Activated T-helper 2 cell treated with anti-CD3 and anti-CD28 coated beads, Interferon-gamma antibody, Interleukin-2, Interleukin-4, amounts not matched to agents 10 μg/mL and 5 μg/mL and 100 μg/mL, durations not matched to agents 14 hours and 24 hours and 36 hours (primary cell): ENCODE measurements at regions of chr16 and their contacts with region 1.

Region 1: DNA sequence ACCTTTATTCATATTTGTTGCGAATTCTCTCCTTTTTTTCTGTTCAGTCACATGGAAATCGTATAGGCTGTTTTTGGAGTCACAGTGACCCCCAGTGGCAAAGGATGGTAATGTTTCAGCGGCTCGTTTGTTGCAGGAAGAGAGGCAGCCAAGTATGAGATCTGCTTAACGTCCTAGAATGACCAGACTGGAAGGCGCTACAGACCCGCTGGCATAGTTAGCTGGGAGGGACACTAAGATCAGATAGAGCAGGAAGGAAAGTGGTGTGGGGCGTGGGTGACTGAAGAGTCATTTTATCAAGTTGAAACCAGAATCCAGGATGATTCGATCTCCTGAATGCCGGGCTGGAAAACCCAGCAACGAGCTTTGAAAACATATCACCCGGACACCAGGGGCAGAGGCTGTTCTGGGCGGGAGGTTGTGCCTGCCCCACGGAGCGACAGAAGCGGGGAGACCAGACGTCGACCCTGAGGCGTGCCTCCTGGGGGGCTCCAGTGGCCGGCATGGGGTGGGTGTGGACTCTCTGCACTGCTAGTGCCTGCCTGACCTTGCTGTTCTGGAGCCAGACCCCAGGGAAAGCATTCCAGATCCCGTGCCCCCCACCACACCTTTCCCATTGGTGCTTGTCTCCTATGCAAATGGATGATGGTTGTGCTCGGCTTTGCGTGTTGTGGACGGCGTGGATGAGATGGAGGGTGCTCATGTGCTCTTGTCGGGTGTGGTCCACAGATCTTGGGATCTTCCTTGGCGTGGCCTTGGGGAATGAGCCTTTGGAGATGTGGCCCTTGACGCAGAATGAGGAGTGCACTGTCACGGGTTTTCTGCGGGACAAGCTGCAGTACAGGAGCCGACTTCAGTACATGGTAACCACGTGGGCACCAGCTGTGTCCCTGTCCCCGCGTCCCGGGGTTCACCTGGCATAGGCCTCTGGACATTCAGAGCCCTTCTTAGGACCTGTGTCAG is 7.7 kb downstream of the IL34 start:
- DNase-seq: peak; percentile 74
- H3K4me3 Mint-ChIP-seq: peak overlapping the region; percentile 44
- H3K27ac Mint-ChIP-seq: no peak overlapping the region
- H3K4me1 Mint-ChIP-seq: peaks cover 5% of the 10 kb centered on the region
- H3K27me3 Mint-ChIP-seq: peaks cover 1% of the 10 kb centered on the region

Region 2: GRCh38 chr16:70576431-70577255 is 77.4 kb before region 1 on chr16:
- intact Hi-C with region 1: loop called (anchors 5 kb)
- DNase-seq: no peak
- H3K4me3 Mint-ChIP-seq: no peak overlapping the region
- H3K27ac Mint-ChIP-seq: peak overlapping the region; percentile 25
- H3K4me1 Mint-ChIP-seq: peaks cover 7% of the 10 kb centered on the region
- H3K27me3 Mint-ChIP-seq: no peaks in the 10 kb centered on the region

Region 3: GRCh38 chr16:70594576-70594975 is 59.5 kb before region 1 on chr16:
- intact Hi-C with region 1: no loop called
- DNase-seq: no peak
- H3K4me3 Mint-ChIP-seq: no peak overlapping the region
- H3K27ac Mint-ChIP-seq: no peak overlapping the region
- H3K4me1 Mint-ChIP-seq: no peaks in the 10 kb centered on the region
- H3K27me3 Mint-ChIP-seq: peaks cover 1% of the 10 kb centered on the region